GM10248 (cell line): ENCODE measurements at regions of chr1 and their contacts with region 1.

Region 1: DNA sequence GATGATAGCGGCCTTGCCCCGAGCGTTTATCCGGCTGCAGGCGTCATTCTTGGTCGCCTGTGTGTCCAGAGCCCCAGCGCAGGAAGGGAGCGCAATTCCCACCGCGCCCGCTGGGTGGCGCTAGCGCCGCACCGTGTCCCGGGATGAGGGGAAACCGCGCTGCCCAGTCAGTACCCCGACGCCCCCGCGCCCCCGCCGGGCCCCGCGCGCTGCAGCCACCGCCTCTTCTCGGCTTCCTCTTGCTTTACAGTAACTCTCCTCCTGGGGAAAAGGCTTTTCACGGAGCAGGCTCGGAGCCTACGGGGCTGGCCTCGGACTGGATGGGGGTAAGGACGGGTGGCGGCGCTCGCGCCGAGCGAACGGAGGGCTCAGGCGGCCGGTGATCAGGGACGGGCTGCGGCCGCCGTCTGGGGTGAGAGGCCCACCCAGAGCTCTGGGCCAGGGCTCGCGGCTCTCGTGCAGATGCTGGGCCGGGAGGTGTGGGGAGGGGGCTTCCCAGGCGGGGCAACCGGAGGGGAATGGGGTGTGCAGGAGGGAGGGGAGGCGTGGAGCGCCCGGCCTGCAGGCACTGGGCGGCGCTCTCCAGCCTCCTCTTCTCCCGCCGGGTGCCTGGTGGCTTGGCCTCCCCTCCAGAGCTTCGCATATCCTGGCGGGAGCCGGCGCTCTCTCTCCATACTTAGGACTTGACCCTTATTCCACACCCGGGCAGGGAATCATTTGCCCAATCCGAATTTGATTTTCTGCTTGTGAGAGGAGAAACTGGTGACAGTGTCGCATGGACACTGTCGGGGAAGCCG is 29.8 kb downstream of the TEX35 start:
- DNase-seq: peak; percentile 89
- CTCF ChIP-seq: peak; percentile 99

Region 2: DNA sequence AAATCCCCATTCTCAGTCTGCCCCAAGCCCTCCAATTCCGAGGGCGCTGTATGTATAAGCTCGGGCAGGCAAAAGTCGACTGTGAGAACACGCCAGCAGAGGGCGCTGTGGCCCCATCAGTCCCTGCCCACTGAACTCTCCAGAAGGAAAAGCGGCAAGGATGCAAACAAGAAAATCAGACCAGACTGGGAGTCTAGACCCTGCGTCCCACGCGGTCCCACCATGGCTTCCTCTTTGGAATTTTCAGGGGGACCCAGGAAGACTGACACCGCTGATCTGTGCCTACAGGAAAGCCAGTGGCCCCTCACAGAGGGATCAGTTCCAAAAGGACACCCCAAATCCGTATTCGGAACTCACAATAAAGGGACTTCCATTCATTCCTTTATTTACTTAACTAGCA is 10.4 kb before region 1 on chr1:
- CTCF ChIA-PET with region 1: interaction called, 46 read pairs
- POLR2A ChIA-PET with region 1: no interaction called
- DNase-seq: peak; percentile 84
- CTCF ChIP-seq: peak; percentile 95

Region 3: DNA sequence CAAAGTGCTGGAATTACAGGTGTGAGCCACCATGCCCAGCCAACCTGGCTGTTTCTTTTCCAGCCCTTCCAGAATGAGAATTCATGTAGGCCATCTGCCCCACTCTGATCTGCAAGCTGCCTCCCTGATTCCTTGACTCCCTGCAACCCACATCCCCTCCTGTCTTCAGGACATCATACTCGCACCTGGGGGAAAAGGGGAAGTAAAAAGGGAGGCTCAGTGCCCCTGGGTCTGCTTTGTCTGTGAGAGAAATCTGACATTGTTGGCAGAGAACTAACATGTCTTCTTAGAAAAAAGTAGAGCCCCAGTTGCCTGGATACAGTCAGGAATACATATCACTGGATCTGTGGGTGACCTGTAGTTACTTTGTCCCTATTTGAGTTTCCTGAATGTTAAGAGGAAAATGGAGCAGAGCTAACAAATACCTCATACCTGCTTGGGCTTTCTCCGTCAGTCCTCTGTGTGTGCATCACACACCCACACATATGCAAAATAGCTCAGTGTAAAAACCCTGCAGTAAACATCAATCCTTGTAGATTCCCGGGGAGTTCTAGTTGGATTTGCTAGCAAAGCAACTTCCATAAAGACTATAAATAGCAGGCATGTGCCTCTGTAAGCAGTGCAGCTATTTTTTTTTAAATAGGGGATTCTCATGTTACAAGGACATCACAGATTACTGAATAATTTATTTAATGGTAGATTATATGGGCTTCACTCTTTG is 33.0 kb after region 1 on chr1:
- CTCF ChIA-PET with region 1: interaction called, 12 read pairs
- POLR2A ChIA-PET with region 1: no interaction called
- DNase-seq: no peak
- CTCF ChIP-seq: no peak

Region 4: GRCh38 chr1:178749581-178750166 is 206.9 kb after region 1 on chr1:
- CTCF ChIA-PET with region 1: interaction called, 118 read pairs
- POLR2A ChIA-PET with region 1: no interaction called
- DNase-seq: no peak
- CTCF ChIP-seq: no peak